ENCODE measurements at regions of chr12 and their contacts with region 1.

Region 1: DNA sequence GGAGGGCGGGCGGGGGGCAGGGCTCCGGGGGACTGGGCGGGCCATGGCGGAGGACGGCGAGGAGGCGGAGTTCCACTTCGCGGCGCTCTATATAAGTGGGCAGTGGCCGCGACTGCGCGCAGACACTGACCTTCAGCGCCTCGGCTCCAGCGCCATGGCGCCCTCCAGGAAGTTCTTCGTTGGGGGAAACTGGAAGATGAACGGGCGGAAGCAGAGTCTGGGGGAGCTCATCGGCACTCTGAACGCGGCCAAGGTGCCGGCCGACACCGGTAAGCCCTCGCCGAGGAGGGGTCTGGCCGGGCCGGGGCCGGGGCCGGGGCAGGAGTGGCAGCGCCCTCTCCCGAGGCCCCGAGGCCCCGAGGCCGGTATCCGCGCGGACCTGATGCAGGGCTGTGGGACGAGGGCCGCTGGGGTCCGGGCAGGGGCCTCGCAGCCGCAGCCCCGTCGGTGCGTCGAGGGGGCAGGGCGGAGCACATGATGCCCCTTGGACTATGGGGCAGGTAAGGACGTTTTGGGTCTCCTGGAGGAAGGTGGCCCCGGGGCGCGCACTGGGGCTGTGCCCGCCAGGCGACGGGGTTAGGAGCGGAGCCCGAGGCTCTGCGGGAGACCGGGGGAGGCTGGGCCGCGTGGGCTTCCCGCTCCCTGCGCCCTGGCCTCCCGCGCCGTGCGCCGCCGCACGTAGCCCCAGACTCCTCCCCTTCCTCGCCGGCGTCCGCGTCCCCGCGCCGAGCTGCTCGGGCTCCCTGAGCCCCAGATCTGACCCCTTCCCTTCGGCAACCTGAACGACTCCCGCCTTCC is at the start of gene TPI1:
- DNase-seq: peak; percentile 80
- H3K4me3 ChIP-seq: peak within 1 kb of the TSS; percentile 100
- H3K27ac ChIP-seq: peak within 1 kb of the TSS; percentile 99
- H3K4me1 ChIP-seq: peaks cover 34% of the 10 kb centered on the region
- H3K27me3 ChIP-seq: no peaks in the 10 kb centered on the region
- CTCF ChIP-seq: no peak
- total RNA-seq, gene TPI1: 1,240 and 1,277 TPM in 2 replicates

Region 2: GRCh38 chr12:6851921-6852650 is 15.5 kb before region 1 on chr12 and contains the start of gene USP5:
- CTCF ChIA-PET with region 1: interaction called, 13 read pairs
- POLR2A ChIA-PET with region 1: interaction called, 3 read pairs
- intact Hi-C with region 1: loop called (anchors 2 kb)
- DNase-seq: peak; percentile 100
- H3K4me3 ChIP-seq: peak within 1 kb of the TSS; percentile 67
- H3K27ac ChIP-seq: peak within 1 kb of the TSS; percentile 81
- H3K4me1 ChIP-seq: peaks cover 24% of the 10 kb centered on the region
- H3K27me3 ChIP-seq: no peaks in the 10 kb centered on the region
- CTCF ChIP-seq: no peak
- total RNA-seq, gene USP5: 209 and 224 TPM in 2 replicates

Region 3: GRCh38 chr12:7108796-7109571 is 241.4 kb after region 1 on chr12 and contains the start of gene C1RL:
- CTCF ChIA-PET with region 1: interaction called, 11 read pairs
- POLR2A ChIA-PET with region 1: no interaction called
- intact Hi-C with region 1: loop called (anchors 5 kb)
- DNase-seq: peak; percentile 82
- H3K4me3 ChIP-seq: peak within 1 kb of the TSS; percentile 42
- H3K27ac ChIP-seq: peak within 1 kb of the TSS; percentile 52
- H3K4me1 ChIP-seq: no peaks in the 10 kb centered on the region
- H3K27me3 ChIP-seq: no peaks in the 10 kb centered on the region
- CTCF ChIP-seq: peak; percentile 96
- total RNA-seq, gene C1RL: 2.4 and 4.0 TPM in 2 replicates